Ascending aorta (tissue), 2 donors: ENCODE measurements at regions of chr4 and their contacts with region 1.

Region 1: DNA sequence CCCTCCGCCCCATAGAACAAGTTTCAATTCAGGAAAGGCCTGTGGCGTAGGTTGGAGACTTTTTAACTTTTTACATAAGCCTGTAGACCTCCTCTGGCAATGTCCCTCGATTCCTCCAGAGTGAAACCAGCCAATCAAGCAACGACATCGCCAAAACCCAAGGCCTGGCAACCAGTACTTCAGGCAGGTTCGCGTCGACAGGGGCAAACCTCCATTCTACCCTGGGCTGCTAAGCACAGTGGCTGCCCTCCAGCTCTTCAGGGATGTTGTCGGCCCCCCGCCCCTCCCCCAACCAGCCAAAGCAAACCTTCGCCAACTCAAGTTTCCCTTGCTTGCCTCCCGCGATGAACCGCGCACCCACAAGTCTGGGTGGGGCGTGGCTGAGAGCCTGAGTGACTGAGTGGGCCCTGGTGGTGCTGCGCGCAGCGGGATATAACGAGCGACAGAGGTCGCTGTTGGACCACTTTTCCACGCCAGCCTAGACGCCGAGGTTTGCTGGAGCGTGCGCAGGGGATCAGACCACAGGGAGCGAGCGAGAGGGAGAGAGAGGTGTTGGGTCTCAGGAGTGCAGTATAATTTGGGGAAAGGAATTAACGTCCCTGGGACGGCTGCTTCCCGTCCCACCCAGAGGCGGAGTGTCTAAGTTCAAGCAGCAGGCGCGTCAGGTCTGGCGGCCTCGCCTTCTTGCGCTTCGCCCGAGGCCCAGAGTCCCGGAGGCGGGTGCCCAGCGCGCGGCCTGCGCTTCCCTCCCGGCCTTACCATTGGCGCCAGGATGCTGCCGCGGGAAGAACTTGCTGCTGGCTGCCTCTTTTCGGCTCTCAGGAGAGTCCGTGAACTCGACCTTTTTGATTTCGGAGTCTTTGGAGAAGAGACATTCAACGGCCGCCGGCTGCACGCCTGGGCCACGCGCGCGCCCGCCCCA is 9.0 kb upstream of the PITX2 start:
- DNase-seq: no peak
- H3K4me3 ChIP-seq: peak overlapping the region; percentile 31 to 50
- H3K27ac ChIP-seq: no peak overlapping the region
- H3K4me1 ChIP-seq: peaks cover 10 to 12% of the 10 kb centered on the region in 2 donors
- H3K27me3 ChIP-seq: peaks cover 27% of the 10 kb centered on the region
- CTCF ChIP-seq: peak; percentile 26 to 62 (median 28)

Region 2: GRCh38 chr4:110310795-110311194 is 321.1 kb before region 1 on chr4:
- intact Hi-C with region 1: no loop called
- DNase-seq: no peak
- H3K4me3 ChIP-seq: no peak overlapping the region
- H3K27ac ChIP-seq: no peak overlapping the region
- H3K4me1 ChIP-seq: no peaks in the 10 kb centered on the region
- H3K27me3 ChIP-seq: no peaks in the 10 kb centered on the region
- CTCF ChIP-seq: no peak

Region 3: DNA sequence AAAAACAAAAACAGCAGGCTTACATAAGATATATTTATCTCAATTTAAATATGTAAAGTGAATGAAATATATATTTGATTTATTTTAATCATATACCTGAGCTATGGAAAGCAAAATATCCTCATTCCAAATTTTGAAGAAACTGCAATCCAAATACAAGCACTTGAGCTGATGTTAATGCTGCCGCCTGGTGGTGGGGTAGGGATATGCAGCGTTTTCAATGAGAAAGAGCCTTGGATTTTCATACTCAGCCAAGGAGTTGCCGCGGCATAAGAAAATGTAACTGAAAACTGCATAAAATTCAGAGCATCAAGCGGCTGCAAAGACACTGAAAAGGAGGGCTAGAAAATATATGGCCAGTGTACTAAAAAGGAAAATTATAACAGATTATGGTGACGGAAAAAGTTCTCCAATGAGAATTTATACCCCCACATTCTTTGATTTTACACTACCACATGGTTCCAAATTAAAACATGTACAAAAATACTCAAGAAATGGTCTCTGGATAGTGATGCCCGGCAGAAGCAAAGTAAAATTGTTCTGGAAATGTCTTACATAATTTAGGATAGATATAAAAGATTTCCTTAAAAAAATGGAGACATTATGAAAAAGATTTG is 651.3 kb after region 1 on chr4:
- intact Hi-C with region 1: loop called (anchors 5 kb)
- DNase-seq: peak in 1 of 2 donors; percentile 63
- H3K4me3 ChIP-seq: no peak overlapping the region
- H3K27ac ChIP-seq: no peak overlapping the region
- H3K4me1 ChIP-seq: no peaks in the 10 kb centered on the region
- H3K27me3 ChIP-seq: no peaks in the 10 kb centered on the region
- CTCF ChIP-seq: peak in 2 of 3 experiments; percentile 47 to 66

Region 4: DNA sequence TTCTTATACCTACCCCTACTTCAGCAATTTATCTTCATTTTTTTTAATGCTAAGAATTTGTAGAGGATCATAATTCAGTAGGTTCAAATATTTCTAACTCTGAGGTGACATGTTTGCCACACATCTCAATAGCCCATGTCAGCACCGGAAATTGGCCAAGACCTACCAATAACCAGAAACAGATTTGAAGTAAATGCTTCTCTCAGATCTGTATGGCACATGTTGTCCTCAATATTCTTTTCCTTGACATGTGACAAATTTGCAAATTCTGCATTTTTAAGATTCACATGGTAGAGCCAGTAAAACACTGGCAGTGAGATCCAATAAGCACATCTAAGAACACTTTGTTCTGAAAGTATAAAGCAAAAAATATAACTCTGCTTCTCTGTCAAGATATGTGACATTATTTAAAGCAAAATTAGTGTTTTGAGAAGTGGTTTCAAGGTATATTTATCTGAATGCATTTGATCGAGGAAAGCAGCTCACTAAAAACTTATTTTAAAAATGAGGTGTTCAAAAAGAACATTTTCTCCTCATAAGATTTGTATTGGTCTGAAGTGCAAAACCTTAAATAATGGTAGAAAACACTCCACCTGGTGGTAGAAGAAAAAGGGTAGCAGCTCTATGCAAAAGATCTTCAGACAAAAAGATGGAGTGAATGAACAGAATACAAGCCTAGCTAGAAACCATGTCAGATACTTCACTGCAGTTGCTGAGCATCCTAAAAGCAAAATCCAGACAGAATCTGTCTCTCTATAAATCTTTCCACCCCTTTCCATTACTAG is 999.6 kb after region 1 on chr4:
- intact Hi-C with region 1: loop called (anchors 10 kb)
- DNase-seq: no peak
- H3K4me3 ChIP-seq: no peak overlapping the region
- H3K27ac ChIP-seq: no peak overlapping the region
- H3K4me1 ChIP-seq: no peaks in the 10 kb centered on the region
- H3K27me3 ChIP-seq: no peaks in the 10 kb centered on the region
- CTCF ChIP-seq: peak in 2 of 3 experiments; percentile 12 to 17